Right cardiac atrium (tissue), 5 donors: ENCODE measurements at regions of chr20 and their contacts with region 1.

Region 1: GRCh38 chr20:10673988-10674711 is at the start of gene JAG1:
- DNase-seq: peak; percentile 97 to 99 (median 98)
- ATAC-seq: peak; percentile 86 to 90
- H3K4me3 ChIP-seq: peak within 1 kb of the TSS; percentile 73
- H3K27ac ChIP-seq: peak within 1 kb of the TSS; percentile 95
- H3K4me1 ChIP-seq: peaks cover 1% of the 10 kb centered on the region
- H3K27me3 ChIP-seq: no peaks in the 10 kb centered on the region
- total RNA-seq, gene JAG1: 23.2 to 33.6 (median 30.0) TPM

Region 2: DNA sequence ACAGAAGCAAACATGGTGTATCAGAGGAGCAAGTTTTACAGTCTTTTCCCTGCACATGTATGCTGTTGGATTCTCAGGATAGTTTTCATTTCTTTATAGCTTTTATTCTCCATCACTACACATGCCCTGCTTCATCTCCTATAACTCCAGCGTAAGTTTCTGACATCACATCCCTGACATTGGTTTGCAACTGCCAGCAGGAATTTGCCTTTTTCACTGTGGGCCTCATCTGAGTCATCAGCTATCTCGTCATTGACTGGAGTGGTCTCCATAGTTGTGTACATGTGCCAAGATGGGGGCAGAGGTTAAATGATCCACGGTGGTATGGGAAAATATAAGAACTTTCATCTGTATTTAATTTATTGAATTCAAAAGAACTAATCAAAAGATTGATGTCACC is 142.3 kb before region 1 on chr20:
- intact Hi-C with region 1: no loop called
- DNase-seq: no peak
- ATAC-seq: no peak
- H3K4me3 ChIP-seq: no peak overlapping the region
- H3K27ac ChIP-seq: no peak overlapping the region
- H3K4me1 ChIP-seq: no peaks in the 10 kb centered on the region
- H3K27me3 ChIP-seq: no peaks in the 10 kb centered on the region

Region 3: GRCh38 chr20:10553326-10553984 is 120.7 kb before region 1 on chr20:
- intact Hi-C with region 1: loop called in 2 of 4 experiments (anchors 5 kb)
- DNase-seq: peak; percentile 69 to 91 (median 82)
- ATAC-seq: peak; percentile 72 to 81
- H3K4me3 ChIP-seq: no peak overlapping the region
- H3K27ac ChIP-seq: no peak overlapping the region
- H3K4me1 ChIP-seq: no peaks in the 10 kb centered on the region
- H3K27me3 ChIP-seq: no peaks in the 10 kb centered on the region

Region 4: GRCh38 chr20:10558635-10559187 is 115.4 kb before region 1 on chr20:
- intact Hi-C with region 1: loop called in 2 of 4 experiments (anchors 5 kb)
- DNase-seq: no peak
- ATAC-seq: no peak
- H3K4me3 ChIP-seq: no peak overlapping the region
- H3K27ac ChIP-seq: no peak overlapping the region
- H3K4me1 ChIP-seq: no peaks in the 10 kb centered on the region
- H3K27me3 ChIP-seq: no peaks in the 10 kb centered on the region

Region 5: DNA sequence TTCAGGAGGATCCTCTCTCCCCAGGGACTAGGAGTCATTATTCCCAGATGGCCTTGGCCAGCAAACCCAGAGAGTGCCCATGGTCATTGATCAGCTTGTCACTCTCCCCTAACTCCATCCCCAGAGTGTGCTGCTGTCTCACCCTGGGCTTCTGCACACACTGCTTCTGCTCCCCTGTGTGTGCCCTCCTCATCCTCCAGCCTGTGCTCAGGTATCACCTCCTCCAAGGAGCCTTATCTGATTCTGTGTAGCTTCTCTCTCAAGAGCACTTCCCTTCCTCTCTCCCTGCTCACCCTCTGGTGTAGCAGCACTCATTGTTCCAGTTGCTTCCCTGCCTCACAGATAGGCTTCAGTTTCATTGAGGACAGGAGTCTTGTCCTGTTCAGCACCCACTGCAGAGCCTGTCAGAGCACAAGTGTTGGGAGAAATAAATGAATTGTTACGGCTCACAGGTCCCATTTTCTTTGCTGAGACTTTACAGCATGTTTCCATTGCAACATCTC is 102.8 kb before region 1 on chr20:
- intact Hi-C with region 1: no loop called
- DNase-seq: no peak
- ATAC-seq: no peak
- H3K4me3 ChIP-seq: no peak overlapping the region
- H3K27ac ChIP-seq: no peak overlapping the region
- H3K4me1 ChIP-seq: no peaks in the 10 kb centered on the region
- H3K27me3 ChIP-seq: no peaks in the 10 kb centered on the region

Region 6: GRCh38 chr20:10783707-10784578 is 109.8 kb after region 1 on chr20:
- intact Hi-C with region 1: no loop called
- DNase-seq: no peak
- ATAC-seq: peak; percentile 19 to 92
- H3K4me3 ChIP-seq: no peak overlapping the region
- H3K27ac ChIP-seq: no peak overlapping the region
- H3K4me1 ChIP-seq: no peaks in the 10 kb centered on the region
- H3K27me3 ChIP-seq: no peaks in the 10 kb centered on the region

Region 7: DNA sequence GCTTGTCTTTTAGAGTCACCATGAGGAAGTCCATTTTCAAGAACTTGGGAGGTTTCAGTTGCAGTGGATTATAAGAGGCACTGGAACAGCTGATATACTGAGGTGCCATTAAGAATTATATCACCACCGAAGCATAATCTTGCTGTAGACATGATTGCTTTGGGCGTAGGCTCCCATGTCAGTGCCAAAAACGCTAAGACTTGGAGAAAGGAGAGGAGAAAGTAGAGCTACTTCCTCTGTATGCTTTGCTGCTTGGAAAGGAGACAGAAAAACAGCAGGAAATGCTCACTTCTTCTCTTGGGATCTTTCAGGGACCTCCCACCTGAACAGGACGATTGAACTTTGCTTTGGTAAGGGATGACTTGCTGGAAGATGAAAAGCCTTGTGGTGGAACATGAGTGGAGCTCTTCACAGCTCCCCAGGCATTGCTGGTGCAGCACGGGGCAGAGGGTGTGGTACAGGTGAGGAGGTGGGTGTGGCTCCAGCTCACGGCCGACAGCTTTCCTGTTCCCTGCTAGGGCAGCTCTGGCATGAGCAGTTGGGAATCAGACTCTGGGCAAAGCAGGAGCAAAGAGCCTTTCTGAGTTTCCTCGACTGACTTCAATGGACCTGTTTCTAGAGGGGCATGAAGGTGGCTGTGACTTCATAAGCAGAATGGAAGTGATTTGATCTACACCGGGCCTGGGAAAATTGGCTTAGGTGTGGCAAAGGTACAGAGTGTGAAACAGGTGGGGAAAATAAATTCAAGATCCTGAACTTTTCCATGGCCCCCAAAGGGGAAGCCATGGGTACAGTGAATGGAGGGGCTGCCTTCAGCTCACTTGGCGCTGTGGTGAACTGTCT is 190.1 kb after region 1 on chr20:
- intact Hi-C with region 1: loop called in 1 of 4 experiments (anchors 10 kb)
- DNase-seq: peak in 2 of 3 donors; percentile 47 to 73
- ATAC-seq: peak; percentile 93 to 95
- H3K4me3 ChIP-seq: no peak overlapping the region
- H3K27ac ChIP-seq: peak overlapping the region; percentile 73
- H3K4me1 ChIP-seq: peaks cover 3% of the 10 kb centered on the region
- H3K27me3 ChIP-seq: no peaks in the 10 kb centered on the region

Region 8: DNA sequence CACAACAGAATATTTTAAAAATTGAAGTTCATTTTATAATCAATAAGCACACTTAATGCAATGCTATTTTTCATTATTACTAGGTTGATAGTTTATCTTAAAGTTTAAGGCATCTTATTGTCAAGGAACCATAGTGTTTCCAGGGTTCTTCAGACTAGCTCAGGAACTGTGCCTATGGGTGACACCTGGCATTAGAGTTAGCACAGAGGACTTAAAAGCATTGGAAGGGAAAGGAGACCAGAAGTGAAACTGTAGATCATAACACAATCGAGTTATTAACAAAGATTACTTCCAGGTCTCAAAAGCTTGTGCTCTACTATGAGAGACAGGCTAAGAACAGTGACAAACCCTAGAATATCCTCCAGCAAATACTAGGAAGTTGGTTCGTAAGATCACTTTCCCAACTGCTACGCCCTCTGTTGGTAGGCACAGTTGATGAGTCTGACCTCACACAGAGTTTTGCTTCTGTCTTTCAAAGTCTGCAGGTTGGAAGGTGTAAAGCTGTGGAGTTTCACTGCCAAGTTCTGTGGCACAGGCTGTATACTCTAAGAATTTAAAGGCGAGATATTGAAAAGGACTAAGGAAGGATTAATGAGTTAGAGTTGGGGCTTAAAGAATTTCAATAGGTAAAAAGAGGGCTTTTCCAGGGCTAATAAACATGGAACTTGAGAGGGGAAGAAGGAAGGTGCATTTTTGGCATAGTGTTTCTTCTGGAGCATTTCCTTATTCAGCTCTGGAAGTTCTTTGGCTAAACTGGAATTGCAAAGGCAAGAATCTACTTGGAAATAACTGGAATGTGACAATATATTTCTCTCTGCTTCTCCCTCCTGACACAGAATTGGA is 531.0 kb after region 1 on chr20:
- intact Hi-C with region 1: loop called in 2 of 4 experiments (anchors 5 to 10 kb)
- DNase-seq: peak; percentile 41 to 74 (median 48)
- ATAC-seq: peak; percentile 92 to 93
- H3K4me3 ChIP-seq: no peak overlapping the region
- H3K27ac ChIP-seq: no peak overlapping the region
- H3K4me1 ChIP-seq: no peaks in the 10 kb centered on the region
- H3K27me3 ChIP-seq: no peaks in the 10 kb centered on the region

Region 9: GRCh38 chr20:11274141-11274594 is 600.0 kb after region 1 on chr20:
- intact Hi-C with region 1: loop called in 3 of 4 experiments (anchors 5 to 10 kb)
- DNase-seq: peak in 1 of 3 donors; percentile 53
- ATAC-seq: peak; percentile 88 to 89
- H3K4me3 ChIP-seq: no peak overlapping the region
- H3K27ac ChIP-seq: no peak overlapping the region
- H3K4me1 ChIP-seq: peaks cover 4% of the 10 kb centered on the region
- H3K27me3 ChIP-seq: no peaks in the 10 kb centered on the region